Activated CD4-positive, alpha-beta T cell treated with anti-CD3 and anti-CD28 coated beads for 36 hours (primary cell): ENCODE measurements at regions of chr5 and their contacts with region 1.

Region 1: GRCh38 chr5:1523771-1524480 is at the start of gene LPCAT1:
- DNase-seq: peak; percentile 86
- ATAC-seq: peak; percentile 89
- H3K4me3 Mint-ChIP-seq: peak within 1 kb of the TSS; percentile 82
- H3K27ac Mint-ChIP-seq: peak within 1 kb of the TSS; percentile 49
- H3K4me1 Mint-ChIP-seq: peaks cover 19% of the 10 kb centered on the region
- H3K27me3 Mint-ChIP-seq: no peaks in the 10 kb centered on the region
- total RNA-seq, gene LPCAT1: 42.5 to 54.5 TPM

Region 2: DNA sequence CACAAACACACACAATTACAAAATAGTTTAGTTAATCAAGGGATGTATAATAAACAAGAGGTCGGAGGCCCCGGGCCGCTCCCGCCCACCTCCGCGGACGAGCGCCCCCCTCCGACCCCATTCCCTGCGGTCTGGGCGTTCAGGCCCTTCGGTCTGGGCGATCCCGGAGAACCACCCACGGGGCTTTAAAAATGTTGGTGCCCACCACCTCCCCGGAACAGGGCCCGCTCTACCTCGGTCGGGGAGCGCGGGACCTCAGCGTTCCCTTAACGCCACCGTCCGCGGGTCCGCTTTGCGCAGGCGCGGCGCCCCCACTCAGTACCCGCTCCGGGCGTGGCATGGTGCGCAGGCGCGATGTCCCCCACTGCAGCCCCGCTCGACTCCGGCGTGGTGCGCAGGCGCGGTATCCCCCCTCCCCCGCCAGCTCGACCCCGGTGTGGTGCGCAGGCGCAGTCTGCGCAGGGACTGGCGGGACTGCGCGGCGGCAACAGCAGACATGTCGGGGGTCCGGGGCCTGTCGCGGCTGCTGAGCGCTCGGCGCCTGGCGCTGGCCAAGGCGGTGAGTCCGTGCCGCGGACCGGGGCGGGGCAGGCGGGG is 1306.0 kb before region 1 on chr5 and contains the starts of genes CCDC127 and SDHA:
- CTCF ChIA-PET with region 1: no interaction called
- POLR2A ChIA-PET with region 1: no interaction called
- intact Hi-C with region 1: loop called in 1 of 2 experiments (anchors 5 kb)
- DNase-seq: peak; percentile 99
- ATAC-seq: peak; percentile 84
- H3K4me3 Mint-ChIP-seq: peak within 1 kb of the TSS; percentile 94
- H3K27ac Mint-ChIP-seq: peak within 1 kb of the TSS; percentile 89
- H3K4me1 Mint-ChIP-seq: peaks cover 60% of the 10 kb centered on the region
- H3K27me3 Mint-ChIP-seq: no peaks in the 10 kb centered on the region
- total RNA-seq, gene CCDC127: 6.0 to 7.0 TPM
- total RNA-seq, gene SDHA: 104 to 121 TPM

Region 3: GRCh38 chr5:776792-777711 is 746.9 kb before region 1 on chr5:
- CTCF ChIA-PET with region 1: no interaction called
- POLR2A ChIA-PET with region 1: no interaction called
- intact Hi-C with region 1: loop called in 1 of 2 experiments (anchors 5 kb)
- DNase-seq: no peak
- ATAC-seq: no peak
- H3K4me3 Mint-ChIP-seq: no peak overlapping the region
- H3K27ac Mint-ChIP-seq: no peak overlapping the region
- H3K4me1 Mint-ChIP-seq: no peaks in the 10 kb centered on the region
- H3K27me3 Mint-ChIP-seq: peaks cover 2% of the 10 kb centered on the region

Region 4: DNA sequence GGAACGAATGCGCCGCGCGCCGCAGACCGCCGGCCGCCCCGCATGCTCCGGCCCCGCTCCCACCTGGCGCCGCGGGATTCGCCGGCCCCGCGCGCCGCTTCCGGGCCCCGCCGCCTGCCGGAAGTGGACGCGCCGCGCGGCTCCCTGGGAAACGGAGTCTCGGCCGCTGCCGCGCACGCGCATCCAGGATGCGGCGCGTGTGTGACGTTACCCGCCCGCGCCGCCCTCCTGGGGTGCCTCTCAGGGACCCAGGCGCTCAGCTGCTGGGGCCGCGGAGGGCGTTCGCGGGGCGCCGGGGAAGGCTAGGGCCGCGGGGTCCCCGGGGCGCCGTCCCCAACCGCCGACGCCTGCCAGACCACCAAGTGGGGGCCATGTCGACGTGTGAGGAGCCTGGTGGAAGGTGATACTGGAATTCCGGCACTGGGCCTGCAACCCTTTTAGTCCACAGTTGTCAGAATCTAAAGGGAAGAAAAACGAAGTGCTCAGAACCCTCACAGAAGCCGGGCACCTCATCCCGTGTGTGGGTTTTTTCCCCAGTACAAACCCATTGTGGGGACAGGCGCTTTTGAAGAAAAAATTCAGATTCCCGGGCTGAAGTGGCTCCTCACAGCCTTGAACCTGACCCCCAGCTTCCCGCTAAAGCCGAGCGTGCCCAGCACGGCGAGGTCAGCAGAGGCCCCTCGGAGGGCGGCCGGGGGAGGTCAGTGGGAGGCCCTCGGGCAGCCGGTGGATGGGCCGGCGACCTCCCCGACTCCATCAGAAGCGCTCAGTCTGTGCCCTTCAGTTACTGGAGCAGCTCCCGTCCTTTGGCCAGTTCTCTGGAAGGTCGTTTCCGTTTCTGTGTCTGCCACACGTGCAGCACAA is 178.7 kb before region 1 on chr5 and contains the start of gene CLPTM1L:
- CTCF ChIA-PET with region 1: no interaction called
- POLR2A ChIA-PET with region 1: no interaction called
- intact Hi-C with region 1: loop called in 1 of 2 experiments (anchors 1 kb)
- DNase-seq: peak; percentile 93
- ATAC-seq: peak; percentile 96
- H3K4me3 Mint-ChIP-seq: peak within 1 kb of the TSS; percentile 94
- H3K27ac Mint-ChIP-seq: peak within 1 kb of the TSS; percentile 92
- H3K4me1 Mint-ChIP-seq: peaks cover 22% of the 10 kb centered on the region
- H3K27me3 Mint-ChIP-seq: no peaks in the 10 kb centered on the region
- total RNA-seq, gene CLPTM1L: 62.1 to 62.2 TPM

Region 5: DNA sequence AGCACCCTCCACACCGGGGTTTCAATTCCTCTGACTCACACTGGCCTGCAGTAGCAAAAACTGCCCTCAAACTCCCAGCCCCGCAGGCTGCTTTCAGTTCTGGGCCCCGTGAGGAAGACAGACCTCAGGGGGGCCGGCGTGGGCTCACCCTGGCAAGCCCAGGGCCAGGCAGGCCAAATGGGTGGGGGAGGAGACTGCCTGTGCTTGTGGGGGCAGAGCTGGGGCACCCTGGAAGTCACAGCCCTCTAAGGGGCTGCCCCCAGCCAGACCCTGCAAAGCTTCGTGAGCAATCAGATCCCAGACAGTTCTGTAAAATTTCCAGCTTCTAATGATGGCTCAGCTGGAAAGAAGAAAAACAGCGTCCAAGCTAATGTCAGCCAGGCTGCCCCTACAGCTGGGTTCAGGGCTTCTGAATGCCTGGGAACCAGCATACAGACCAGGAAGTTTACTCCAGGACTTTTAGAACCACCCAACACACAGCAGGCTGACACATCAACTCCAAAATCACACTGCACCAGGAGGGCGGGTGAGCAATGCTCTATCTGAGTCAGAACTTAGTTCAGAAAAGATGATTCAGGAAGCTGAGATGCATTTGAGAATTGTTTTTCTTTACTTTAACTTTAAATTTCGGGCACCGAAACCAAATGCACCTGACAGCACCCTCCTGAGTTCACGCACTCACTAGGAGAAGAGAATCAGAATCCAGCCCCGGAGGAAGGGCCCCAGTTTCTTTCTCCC is 34.8 kb before region 1 on chr5:
- CTCF ChIA-PET with region 1: no interaction called
- POLR2A ChIA-PET with region 1: no interaction called
- intact Hi-C with region 1: loop called (anchors 1 to 5 kb)
- DNase-seq: peak; percentile 80
- ATAC-seq: peak; percentile 96
- H3K4me3 Mint-ChIP-seq: no peak overlapping the region
- H3K27ac Mint-ChIP-seq: peak overlapping the region; percentile 82
- H3K4me1 Mint-ChIP-seq: peaks cover 37% of the 10 kb centered on the region
- H3K27me3 Mint-ChIP-seq: no peaks in the 10 kb centered on the region

Region 6: GRCh38 chr5:1594357-1595106 is 70.6 kb after region 1 on chr5:
- CTCF ChIA-PET with region 1: no interaction called
- POLR2A ChIA-PET with region 1: no interaction called
- intact Hi-C with region 1: loop called in 1 of 2 experiments (anchors 2 kb)
- DNase-seq: peak; percentile 84
- ATAC-seq: peak; percentile 89
- H3K4me3 Mint-ChIP-seq: peak overlapping the region; percentile 67
- H3K27ac Mint-ChIP-seq: peak overlapping the region; percentile 31
- H3K4me1 Mint-ChIP-seq: peaks cover 13% of the 10 kb centered on the region
- H3K27me3 Mint-ChIP-seq: no peaks in the 10 kb centered on the region

Region 7: GRCh38 chr5:1799602-1800471 is 275.9 kb after region 1 on chr5 and contains the start of gene MRPL36:
- CTCF ChIA-PET with region 1: no interaction called
- POLR2A ChIA-PET with region 1: no interaction called
- intact Hi-C with region 1: loop called in 1 of 2 experiments (anchors 1 kb)
- DNase-seq: peak; percentile 97
- ATAC-seq: peak; percentile 79
- H3K4me3 Mint-ChIP-seq: peak within 1 kb of the TSS; percentile 94
- H3K27ac Mint-ChIP-seq: peak within 1 kb of the TSS; percentile 97
- H3K4me1 Mint-ChIP-seq: peaks cover 54% of the 10 kb centered on the region
- H3K27me3 Mint-ChIP-seq: no peaks in the 10 kb centered on the region
- total RNA-seq, gene MRPL36: 51.4 to 64.9 TPM